Transverse colon (tissue), 4 donors: ENCODE measurements at regions of chr20 and their contacts with region 1.

Region 1: GRCh38 chr20:19141998-19142397 is 70.4 kb upstream of the SLC24A3 start:
- DNase-seq: no peak
- H3K4me3 ChIP-seq: no peak overlapping the region
- H3K27ac ChIP-seq: no peak overlapping the region
- H3K4me1 ChIP-seq: peaks cover 0 to 7% (median 0%) of the 10 kb centered on the region in 4 donors
- H3K27me3 ChIP-seq: no peaks in the 10 kb centered on the region
- CTCF ChIP-seq: no peak
- EP300 ChIP-seq: no peak
- POLR2A ChIP-seq: no peak

Region 2: DNA sequence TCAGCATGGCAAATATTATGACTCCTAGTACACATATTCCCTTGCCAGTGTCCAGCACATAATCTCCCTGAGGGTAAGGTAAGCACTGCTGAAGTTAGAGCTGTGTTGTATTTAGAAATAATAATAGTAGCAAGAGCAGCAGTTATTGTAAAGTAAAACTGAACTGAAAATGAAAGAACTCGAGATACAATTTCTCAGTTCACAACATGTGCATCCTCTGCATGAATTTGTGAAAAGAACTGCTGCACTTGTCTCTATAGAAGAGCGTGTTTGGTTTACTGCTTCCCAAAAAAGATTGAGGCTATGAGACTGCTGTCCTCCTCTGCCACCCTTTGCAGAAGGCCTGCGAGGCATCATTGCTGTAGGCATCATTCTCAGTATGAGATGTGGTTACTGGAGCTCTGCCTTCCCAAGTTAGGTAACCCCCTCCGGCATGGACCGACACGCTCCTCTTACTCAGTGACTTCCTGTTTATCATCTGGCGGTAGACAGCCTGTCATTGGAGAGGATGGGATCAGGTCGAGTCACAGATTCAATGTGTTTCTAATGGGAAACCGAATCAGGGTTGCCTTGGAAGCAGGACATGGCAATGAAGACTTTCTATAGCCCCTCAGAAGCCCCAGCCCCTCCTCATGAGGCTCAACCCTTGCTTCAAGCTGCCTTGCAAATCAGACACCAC is 118.6 kb after region 1 on chr20:
- in situ Hi-C with region 1: no loop called
- intact Hi-C with region 1: no loop called
- DNase-seq: no peak
- H3K4me3 ChIP-seq: no peak overlapping the region
- H3K27ac ChIP-seq: no peak overlapping the region
- H3K4me1 ChIP-seq: peaks cover 0 to 7% (median 0%) of the 10 kb centered on the region in 4 donors
- H3K27me3 ChIP-seq: no peaks in the 10 kb centered on the region
- CTCF ChIP-seq: no peak
- EP300 ChIP-seq: no peak
- POLR2A ChIP-seq: no peak

Region 3: DNA sequence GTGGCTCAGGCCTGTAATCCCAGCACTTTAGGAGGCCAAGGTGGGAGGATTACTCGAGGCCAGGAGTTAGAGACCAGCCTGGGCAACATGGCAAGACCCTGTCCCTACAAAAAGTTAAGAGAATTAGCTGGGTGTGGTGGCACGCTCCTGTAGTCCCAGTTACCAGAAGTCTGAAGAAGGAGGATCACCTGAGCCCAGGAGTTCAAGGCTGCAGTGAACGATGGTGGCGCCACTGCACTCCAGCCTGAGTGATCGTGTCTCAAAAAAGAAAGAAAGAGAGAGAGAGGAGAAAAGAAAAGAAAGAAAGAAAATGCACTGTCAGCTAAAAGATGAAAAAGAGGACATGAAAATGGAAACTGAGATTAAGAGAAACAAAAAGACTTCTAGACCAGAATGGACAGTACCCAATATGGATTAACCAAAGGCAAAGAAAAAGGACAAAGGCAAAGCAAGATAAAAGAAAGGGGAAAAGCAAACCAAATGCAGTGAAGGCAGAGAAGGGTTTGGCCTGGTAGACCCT is 1579.4 kb after region 1 on chr20:
- in situ Hi-C with region 1: no loop called
- intact Hi-C with region 1: loop called (anchors 5 kb)
- DNase-seq: no peak
- H3K4me3 ChIP-seq: no peak overlapping the region
- H3K27ac ChIP-seq: no peak overlapping the region
- H3K4me1 ChIP-seq: no peaks in the 10 kb centered on the region
- H3K27me3 ChIP-seq: no peaks in the 10 kb centered on the region
- CTCF ChIP-seq: no peak
- EP300 ChIP-seq: no peak
- POLR2A ChIP-seq: no peak